ENCODE measurements at regions of chr2 and their contacts with region 1.

Region 1: GRCh38 chr2:237662671-237663093 is 35.3 kb downstream of the LRRFIP1 start:
- DNase-seq: peak; percentile 89 to 96 (median 93)
- H3K4me3 ChIP-seq: peak overlapping the region in 1 of 4 donors; percentile 31
- H3K27ac ChIP-seq: peak overlapping the region in 2 of 5 donors; percentile 56 to 62
- H3K4me1 ChIP-seq: peaks cover 5 to 16% of the 10 kb centered on the region in 2 donors
- H3K27me3 ChIP-seq: no peaks in the 10 kb centered on the region
- CTCF ChIP-seq: peak in 1 of 6 experiments; percentile 8
- POLR2A ChIP-seq: no peak

Region 2: DNA sequence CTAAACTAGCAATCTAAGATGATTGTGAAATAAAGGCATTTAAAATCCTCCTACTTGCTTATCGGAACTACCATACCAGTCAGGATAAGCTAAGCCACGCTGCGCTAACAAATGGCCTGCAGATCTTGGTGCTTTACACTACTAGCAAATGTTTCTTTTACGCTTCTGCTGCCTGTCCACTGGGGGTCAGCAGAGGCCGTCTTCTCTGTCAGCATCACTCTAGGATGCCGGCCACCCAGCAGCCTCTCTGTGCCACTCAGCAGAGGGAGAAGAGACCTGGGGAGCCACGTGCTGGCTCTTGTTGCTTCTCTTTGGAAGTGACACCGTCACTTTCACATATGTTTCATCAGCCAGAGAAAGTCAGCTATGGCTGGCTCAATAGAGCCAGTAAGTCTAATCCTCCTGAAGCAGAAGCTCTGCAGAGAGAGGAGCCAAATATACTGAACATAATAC is 540.4 kb before region 1 on chr2:
- intact Hi-C with region 1: no loop called
- DNase-seq: peak; percentile 50 to 79 (median 67)
- H3K4me3 ChIP-seq: no peak overlapping the region
- H3K27ac ChIP-seq: no peak overlapping the region
- H3K4me1 ChIP-seq: no peaks in the 10 kb centered on the region
- H3K27me3 ChIP-seq: no peaks in the 10 kb centered on the region
- CTCF ChIP-seq: peak; percentile 47 to 75 (median 64)
- POLR2A ChIP-seq: no peak

Region 3: GRCh38 chr2:237590272-237591140 is 72.2 kb before region 1 on chr2 and contains the start of gene RAB17:
- intact Hi-C with region 1: loop called in 1 of 2 experiments (anchors 10 kb)
- DNase-seq: peak in 2 of 7 donors; percentile 49 to 61
- H3K4me3 ChIP-seq: no peak within 1 kb of the TSS
- H3K27ac ChIP-seq: peak within 1 kb of the TSS in 1 of 5 donors; percentile 34
- H3K4me1 ChIP-seq: peaks cover 14 to 20% of the 10 kb centered on the region in 2 donors
- H3K27me3 ChIP-seq: no peaks in the 10 kb centered on the region
- CTCF ChIP-seq: no peak
- POLR2A ChIP-seq: no peak
- total RNA-seq, gene RAB17: 0.91 to 18.7 (median 5.4) TPM

Region 4: DNA sequence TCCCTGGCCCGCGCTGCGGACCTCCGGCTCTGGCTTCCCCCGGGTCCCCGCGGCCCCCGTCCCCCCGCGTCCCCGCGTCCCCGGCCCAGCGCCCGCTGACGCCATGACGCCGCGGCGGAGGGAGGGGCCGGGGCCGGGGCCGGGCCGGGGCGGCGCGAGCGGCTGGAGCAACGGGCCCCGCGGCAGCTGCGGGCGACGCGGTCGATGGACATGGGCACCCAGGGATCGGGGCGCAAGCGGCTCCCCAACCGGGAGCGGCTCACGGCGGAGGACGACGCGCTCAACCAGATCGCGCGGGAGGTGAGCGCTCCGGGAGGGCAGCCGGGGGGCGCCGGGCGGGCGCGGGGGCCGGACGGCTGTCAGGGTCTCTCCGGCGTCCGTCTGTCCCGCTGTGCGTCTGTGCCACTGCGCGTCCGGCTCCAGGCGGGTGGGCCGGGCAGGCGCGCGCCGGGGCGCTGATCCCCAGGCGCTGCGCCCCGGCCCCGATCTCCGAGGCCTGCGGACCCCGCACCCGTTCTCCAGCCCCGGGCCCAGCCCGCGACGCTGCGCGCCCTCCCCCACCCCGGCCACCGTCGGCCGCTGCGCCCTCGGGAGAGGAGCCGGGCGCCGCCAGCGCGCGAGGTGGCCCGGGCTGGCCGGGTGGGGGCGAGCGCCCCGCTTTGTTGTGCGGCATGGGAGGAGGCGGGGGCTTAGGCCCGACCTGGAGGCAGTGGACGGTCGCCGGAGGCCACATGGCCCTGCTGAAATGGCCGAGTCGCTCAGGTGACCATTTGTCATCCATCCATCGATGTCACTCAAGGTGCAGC is 35.0 kb before region 1 on chr2 and contains the start of gene LRRFIP1:
- intact Hi-C with region 1: no loop called
- DNase-seq: peak in 4 of 7 donors; percentile 25 to 60 (median 43)
- H3K4me3 ChIP-seq: peak within 1 kb of the TSS in 2 of 4 donors; percentile 24 to 89
- H3K27ac ChIP-seq: peak within 1 kb of the TSS in 3 of 5 donors; percentile 35 to 78 (median 49)
- H3K4me1 ChIP-seq: peaks cover 0 to 23% of the 10 kb centered on the region in 2 donors
- H3K27me3 ChIP-seq: no peaks in the 10 kb centered on the region
- CTCF ChIP-seq: peak in 1 of 6 experiments; percentile 15
- POLR2A ChIP-seq: peak in 1 of 2 donors; percentile 9
- total RNA-seq, gene LRRFIP1: 18.7 to 79.7 (median 49.7) TPM